ENCODE measurements at regions of chr2 and their contacts with region 1.

Region 1: GRCh38 chr2:196171248-196171871 is at the start of gene STK17B:
- DNase-seq: peak; percentile 96 to 98 (median 97)
- ATAC-seq: peak; percentile 63
- H3K4me3 ChIP-seq: peak within 1 kb of the TSS; percentile 82 to 87
- H3K4me3 Mint-ChIP-seq: peak within 1 kb of the TSS; percentile 97
- H3K27ac ChIP-seq: peak within 1 kb of the TSS; percentile 91 to 98
- H3K27ac Mint-ChIP-seq: peak within 1 kb of the TSS; percentile 98
- H3K4me1 ChIP-seq: peaks cover 39% of the 10 kb centered on the region
- H3K4me1 Mint-ChIP-seq: peaks cover 42% of the 10 kb centered on the region
- H3K27me3 ChIP-seq: no peaks in the 10 kb centered on the region
- H3K27me3 Mint-ChIP-seq: no peaks in the 10 kb centered on the region
- CTCF ChIP-seq: no peak
- total RNA-seq, gene STK17B: 582 to 601 TPM

Region 2: DNA sequence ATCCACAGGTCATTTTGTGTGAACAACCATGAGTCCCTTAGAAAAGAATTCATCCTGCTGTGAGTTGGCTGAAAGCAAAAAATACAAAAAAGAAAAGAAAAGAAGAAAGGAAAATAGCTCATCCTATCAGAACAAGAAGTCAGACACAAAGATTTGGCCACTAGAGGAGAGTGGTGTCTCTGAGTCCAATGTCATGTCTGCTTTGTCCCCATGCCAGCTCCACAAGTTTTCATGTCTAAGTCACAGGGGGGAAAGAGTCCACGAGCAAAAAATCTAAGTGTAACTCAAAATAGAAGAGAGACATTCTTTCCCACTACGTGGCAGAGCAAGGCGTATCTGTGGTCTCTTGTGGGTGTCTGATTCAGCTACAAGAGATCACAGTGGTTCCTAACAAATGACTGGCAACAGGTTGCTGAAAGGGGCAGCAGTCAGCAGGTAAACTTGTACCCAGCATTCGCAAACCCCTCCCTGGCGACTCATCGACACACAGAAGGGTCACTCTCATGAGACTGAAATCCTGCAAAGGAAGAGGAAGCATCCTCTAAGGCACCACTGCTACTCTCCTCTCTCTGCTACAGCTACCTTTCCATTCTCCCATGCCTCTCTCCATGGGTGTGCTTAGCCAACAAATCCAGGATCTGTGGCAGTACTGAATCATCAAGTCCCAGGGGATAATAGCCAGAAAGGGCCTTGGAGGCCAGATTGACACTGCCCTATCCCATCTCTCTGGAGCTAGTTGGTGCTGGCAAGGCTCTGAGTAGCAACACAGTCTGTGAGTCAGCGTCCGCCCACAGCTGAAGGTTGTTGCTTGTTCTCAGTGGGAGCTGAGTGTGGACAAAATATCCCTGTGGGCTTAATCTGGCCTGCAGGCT is 637.4 kb before region 1 on chr2:
- CTCF ChIA-PET with region 1: no interaction called
- POLR2A ChIA-PET with region 1: no interaction called
- intact Hi-C with region 1: loop called in 1 of 2 experiments (anchors 10 kb)
- DNase-seq: peak; percentile 7 to 70 (median 60)
- ATAC-seq: peak; percentile 63
- H3K4me3 ChIP-seq: peak overlapping the region; percentile 11 to 53
- H3K4me3 Mint-ChIP-seq: peak overlapping the region; percentile 79
- H3K27ac ChIP-seq: peak overlapping the region; percentile 52 to 66
- H3K27ac Mint-ChIP-seq: peak overlapping the region; percentile 98
- H3K4me1 ChIP-seq: peaks cover 79% of the 10 kb centered on the region
- H3K4me1 Mint-ChIP-seq: peaks cover 81% of the 10 kb centered on the region
- H3K27me3 ChIP-seq: no peaks in the 10 kb centered on the region
- H3K27me3 Mint-ChIP-seq: no peaks in the 10 kb centered on the region
- CTCF ChIP-seq: no peak

Region 3: DNA sequence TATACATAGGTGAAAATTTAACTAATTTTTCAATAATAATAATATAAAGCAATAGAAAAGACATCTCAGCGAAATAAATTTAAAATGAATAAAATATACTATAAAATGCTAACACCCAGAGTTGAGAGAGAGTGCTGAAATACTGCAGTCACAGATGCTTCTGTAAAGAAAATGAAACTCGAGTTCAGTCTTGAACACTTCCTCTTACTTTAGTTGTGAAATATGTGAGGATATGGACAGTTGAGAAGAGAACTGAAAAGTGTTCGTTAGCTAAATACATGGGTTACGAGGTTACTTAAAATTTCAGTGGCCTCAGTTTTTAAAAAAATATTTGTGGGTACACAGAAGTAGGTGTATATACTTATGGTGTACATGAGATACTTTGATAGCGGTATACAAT is 209.5 kb before region 1 on chr2:
- CTCF ChIA-PET with region 1: no interaction called
- POLR2A ChIA-PET with region 1: no interaction called
- intact Hi-C with region 1: no loop called
- DNase-seq: no peak
- ATAC-seq: no peak
- H3K4me3 ChIP-seq: no peak overlapping the region
- H3K4me3 Mint-ChIP-seq: no peak overlapping the region
- H3K27ac ChIP-seq: no peak overlapping the region
- H3K27ac Mint-ChIP-seq: no peak overlapping the region
- H3K4me1 ChIP-seq: no peaks in the 10 kb centered on the region
- H3K4me1 Mint-ChIP-seq: no peaks in the 10 kb centered on the region
- H3K27me3 ChIP-seq: no peaks in the 10 kb centered on the region
- H3K27me3 Mint-ChIP-seq: peaks cover 3% of the 10 kb centered on the region
- CTCF ChIP-seq: no peak

Region 4: GRCh38 chr2:196012314-196012713 is 159.0 kb before region 1 on chr2:
- CTCF ChIA-PET with region 1: no interaction called
- POLR2A ChIA-PET with region 1: no interaction called
- intact Hi-C with region 1: no loop called
- DNase-seq: no peak
- ATAC-seq: no peak
- H3K4me3 ChIP-seq: no peak overlapping the region
- H3K4me3 Mint-ChIP-seq: no peak overlapping the region
- H3K27ac ChIP-seq: no peak overlapping the region
- H3K27ac Mint-ChIP-seq: no peak overlapping the region
- H3K4me1 ChIP-seq: no peaks in the 10 kb centered on the region
- H3K4me1 Mint-ChIP-seq: no peaks in the 10 kb centered on the region
- H3K27me3 ChIP-seq: no peaks in the 10 kb centered on the region
- H3K27me3 Mint-ChIP-seq: peaks cover 7% of the 10 kb centered on the region
- CTCF ChIP-seq: no peak

Region 5: GRCh38 chr2:196076778-196077568 is 94.4 kb before region 1 on chr2:
- CTCF ChIA-PET with region 1: interaction called, 24 read pairs
- POLR2A ChIA-PET with region 1: interaction called, 20 read pairs
- intact Hi-C with region 1: loop called in 1 of 2 experiments (anchors 1 kb)
- DNase-seq: no peak
- ATAC-seq: no peak
- H3K4me3 ChIP-seq: no peak overlapping the region
- H3K4me3 Mint-ChIP-seq: no peak overlapping the region
- H3K27ac ChIP-seq: no peak overlapping the region
- H3K27ac Mint-ChIP-seq: no peak overlapping the region
- H3K4me1 ChIP-seq: peaks cover 13% of the 10 kb centered on the region
- H3K4me1 Mint-ChIP-seq: peaks cover 23% of the 10 kb centered on the region
- H3K27me3 ChIP-seq: no peaks in the 10 kb centered on the region
- H3K27me3 Mint-ChIP-seq: no peaks in the 10 kb centered on the region
- CTCF ChIP-seq: no peak

Region 6: GRCh38 chr2:196149948-196150347 is 21.4 kb before region 1 on chr2:
- CTCF ChIA-PET with region 1: interaction called, 5 read pairs
- POLR2A ChIA-PET with region 1: interaction called, 24 read pairs
- intact Hi-C with region 1: loop called (anchors 2 kb)
- DNase-seq: peak in 2 of 9 experiments; percentile 35 to 65
- ATAC-seq: peak; percentile 27
- H3K4me3 ChIP-seq: peak overlapping the region in 1 of 2 experiments; percentile 23
- H3K4me3 Mint-ChIP-seq: peak overlapping the region; percentile 70
- H3K27ac ChIP-seq: peak overlapping the region; percentile 4 to 17
- H3K27ac Mint-ChIP-seq: peak overlapping the region; percentile 86
- H3K4me1 ChIP-seq: peaks cover 92% of the 10 kb centered on the region
- H3K4me1 Mint-ChIP-seq: peaks cover 89% of the 10 kb centered on the region
- H3K27me3 ChIP-seq: no peaks in the 10 kb centered on the region
- H3K27me3 Mint-ChIP-seq: no peaks in the 10 kb centered on the region
- CTCF ChIP-seq: no peak

Region 7: GRCh38 chr2:196200557-196200956 is 29.2 kb after region 1 on chr2:
- CTCF ChIA-PET with region 1: interaction called, 5 read pairs
- POLR2A ChIA-PET with region 1: interaction called, 21 read pairs
- intact Hi-C with region 1: no loop called
- DNase-seq: peak in 2 of 9 experiments; percentile 57 to 72
- ATAC-seq: peak; percentile 83
- H3K4me3 ChIP-seq: peak overlapping the region in 1 of 2 experiments; percentile 30
- H3K4me3 Mint-ChIP-seq: peak overlapping the region; percentile 59
- H3K27ac ChIP-seq: peak overlapping the region; percentile 0 to 58
- H3K27ac Mint-ChIP-seq: peak overlapping the region; percentile 81
- H3K4me1 ChIP-seq: peaks cover 28% of the 10 kb centered on the region
- H3K4me1 Mint-ChIP-seq: peaks cover 50% of the 10 kb centered on the region
- H3K27me3 ChIP-seq: no peaks in the 10 kb centered on the region
- H3K27me3 Mint-ChIP-seq: no peaks in the 10 kb centered on the region
- CTCF ChIP-seq: no peak

Region 8: DNA sequence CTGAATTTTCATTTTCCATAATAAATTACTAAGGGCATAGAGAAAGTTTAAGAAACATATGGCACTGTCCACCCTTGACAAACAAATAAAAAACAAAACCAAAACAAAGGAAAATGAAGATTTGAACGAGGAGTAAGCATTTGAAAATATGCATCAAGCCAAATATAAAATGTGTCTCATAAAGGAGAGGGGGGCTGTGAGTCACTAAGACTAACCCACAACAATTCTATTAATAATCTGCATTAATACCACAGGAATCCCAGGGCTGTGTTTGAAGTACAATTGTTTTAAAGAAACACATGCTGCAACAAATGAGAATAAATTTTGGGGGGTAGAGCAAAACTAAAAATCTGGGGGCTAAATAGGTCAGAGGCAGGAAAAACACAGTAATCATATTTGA is 53.9 kb after region 1 on chr2:
- CTCF ChIA-PET with region 1: interaction called, 62 read pairs
- POLR2A ChIA-PET with region 1: interaction called, 33 read pairs
- intact Hi-C with region 1: no loop called
- DNase-seq: no peak
- ATAC-seq: no peak
- H3K4me3 ChIP-seq: no peak overlapping the region
- H3K4me3 Mint-ChIP-seq: peak overlapping the region; percentile 8
- H3K27ac ChIP-seq: no peak overlapping the region
- H3K27ac Mint-ChIP-seq: peak overlapping the region; percentile 25
- H3K4me1 ChIP-seq: peaks cover 61% of the 10 kb centered on the region
- H3K4me1 Mint-ChIP-seq: peaks cover 78% of the 10 kb centered on the region
- H3K27me3 ChIP-seq: no peaks in the 10 kb centered on the region
- H3K27me3 Mint-ChIP-seq: no peaks in the 10 kb centered on the region
- CTCF ChIP-seq: no peak

Region 9: GRCh38 chr2:196263181-196263747 is 91.9 kb after region 1 on chr2:
- CTCF ChIA-PET with region 1: interaction called, 8 read pairs
- POLR2A ChIA-PET with region 1: interaction called, 9 read pairs
- intact Hi-C with region 1: loop called in 1 of 2 experiments (anchors 5 kb)
- DNase-seq: peak in 6 of 9 experiments; percentile 39 to 87 (median 58)
- ATAC-seq: peak; percentile 82
- H3K4me3 ChIP-seq: peak overlapping the region; percentile 3 to 12
- H3K4me3 Mint-ChIP-seq: peak overlapping the region; percentile 72
- H3K27ac ChIP-seq: peak overlapping the region; percentile 27 to 61
- H3K27ac Mint-ChIP-seq: peak overlapping the region; percentile 93
- H3K4me1 ChIP-seq: peaks cover 72% of the 10 kb centered on the region
- H3K4me1 Mint-ChIP-seq: peaks cover 78% of the 10 kb centered on the region
- H3K27me3 ChIP-seq: no peaks in the 10 kb centered on the region
- H3K27me3 Mint-ChIP-seq: no peaks in the 10 kb centered on the region
- CTCF ChIP-seq: no peak

Region 10: DNA sequence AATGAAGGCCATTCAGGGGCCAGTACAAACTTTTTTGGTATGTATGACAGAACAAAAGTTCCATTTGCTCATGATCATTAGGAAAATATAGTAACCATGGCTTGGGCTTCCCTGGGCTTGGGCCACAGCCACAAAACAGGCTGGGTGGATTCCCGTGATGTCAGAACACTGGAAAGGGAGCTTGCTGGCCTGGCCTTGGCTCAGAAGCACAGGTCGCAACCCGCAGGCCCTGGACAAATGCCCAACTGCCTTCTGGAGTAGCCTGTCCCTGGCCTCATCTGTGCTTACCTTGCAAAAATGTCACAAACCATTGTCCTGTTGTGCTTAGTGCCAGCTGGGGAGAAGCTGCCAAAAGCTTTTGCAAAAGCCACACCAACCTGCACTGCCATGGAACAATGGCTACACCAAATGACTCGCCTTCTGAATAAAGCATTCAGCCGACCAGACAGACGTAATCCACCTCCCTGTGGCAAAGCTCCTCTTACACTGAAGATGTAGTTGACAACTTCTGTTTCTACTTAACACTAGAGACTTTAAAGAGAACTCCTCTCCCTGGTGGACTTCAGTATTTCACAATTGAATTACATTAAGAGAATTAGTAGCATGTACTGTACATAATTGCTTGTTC is 1013.7 kb after region 1 on chr2:
- CTCF ChIA-PET with region 1: no interaction called
- POLR2A ChIA-PET with region 1: no interaction called
- intact Hi-C with region 1: no loop called
- DNase-seq: no peak
- ATAC-seq: no peak
- H3K4me3 ChIP-seq: no peak overlapping the region
- H3K4me3 Mint-ChIP-seq: no peak overlapping the region
- H3K27ac ChIP-seq: no peak overlapping the region
- H3K27ac Mint-ChIP-seq: peak overlapping the region; percentile 86
- H3K4me1 ChIP-seq: peaks cover 48% of the 10 kb centered on the region
- H3K4me1 Mint-ChIP-seq: peaks cover 92% of the 10 kb centered on the region
- H3K27me3 ChIP-seq: no peaks in the 10 kb centered on the region
- H3K27me3 Mint-ChIP-seq: no peaks in the 10 kb centered on the region
- CTCF ChIP-seq: no peak

Measured in CD8-positive, alpha-beta T cell (primary cell).